Mammary epithelial cell (primary cell): ENCODE measurements at regions of chr13 and their contacts with region 1.

Region 1: DNA sequence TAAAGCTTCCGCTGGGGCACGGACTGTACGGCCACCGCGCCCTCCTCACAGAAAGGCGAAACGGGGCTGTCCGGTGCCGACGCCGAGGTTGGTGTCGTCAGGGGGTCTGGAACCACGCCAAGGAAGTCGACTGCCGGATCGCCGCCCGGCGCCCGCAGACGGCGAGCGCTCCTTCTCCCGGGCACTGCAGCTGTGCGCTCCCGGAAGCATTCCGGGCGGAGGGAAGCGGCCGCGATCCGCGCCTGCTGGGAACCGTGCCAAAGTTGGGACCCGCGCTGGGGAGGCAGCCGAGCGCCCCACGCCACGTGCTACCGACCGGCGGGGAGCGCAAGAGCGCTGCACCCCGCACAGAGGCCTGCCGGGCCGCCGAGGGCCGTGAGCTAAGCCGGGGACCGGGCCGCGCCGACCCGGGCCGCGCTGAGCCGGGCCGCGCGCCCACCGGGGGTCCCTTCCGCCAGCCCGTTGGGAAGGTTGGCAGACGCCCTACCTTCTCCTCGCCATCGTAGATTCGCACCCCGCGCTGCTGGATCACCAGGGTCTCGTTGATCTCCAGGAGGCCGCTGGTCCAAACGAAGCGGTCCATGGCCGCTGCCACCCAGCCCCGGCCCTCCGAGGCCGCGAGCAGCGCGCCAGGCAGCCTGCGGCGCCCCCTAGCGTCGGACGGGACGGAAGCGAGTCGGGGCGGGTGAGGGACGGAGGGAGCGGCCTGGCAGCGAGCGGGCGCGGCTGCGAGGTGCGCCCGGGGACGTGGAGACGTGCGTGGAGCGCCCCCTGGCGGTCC is at the start of gene VPS36:
- DNase-seq: peak; percentile 94
- H3K4me3 ChIP-seq: peak within 1 kb of the TSS; percentile 72 to 85 (median 73)
- H3K27ac ChIP-seq: peak within 1 kb of the TSS; percentile 79
- H3K4me1 ChIP-seq: peaks cover 42% of the 10 kb centered on the region
- H3K27me3 ChIP-seq: no peaks in the 10 kb centered on the region
- CTCF ChIP-seq: peak; percentile 85 to 97
- total RNA-seq, gene VPS36: 40.5 to 48.7 TPM

Region 2: DNA sequence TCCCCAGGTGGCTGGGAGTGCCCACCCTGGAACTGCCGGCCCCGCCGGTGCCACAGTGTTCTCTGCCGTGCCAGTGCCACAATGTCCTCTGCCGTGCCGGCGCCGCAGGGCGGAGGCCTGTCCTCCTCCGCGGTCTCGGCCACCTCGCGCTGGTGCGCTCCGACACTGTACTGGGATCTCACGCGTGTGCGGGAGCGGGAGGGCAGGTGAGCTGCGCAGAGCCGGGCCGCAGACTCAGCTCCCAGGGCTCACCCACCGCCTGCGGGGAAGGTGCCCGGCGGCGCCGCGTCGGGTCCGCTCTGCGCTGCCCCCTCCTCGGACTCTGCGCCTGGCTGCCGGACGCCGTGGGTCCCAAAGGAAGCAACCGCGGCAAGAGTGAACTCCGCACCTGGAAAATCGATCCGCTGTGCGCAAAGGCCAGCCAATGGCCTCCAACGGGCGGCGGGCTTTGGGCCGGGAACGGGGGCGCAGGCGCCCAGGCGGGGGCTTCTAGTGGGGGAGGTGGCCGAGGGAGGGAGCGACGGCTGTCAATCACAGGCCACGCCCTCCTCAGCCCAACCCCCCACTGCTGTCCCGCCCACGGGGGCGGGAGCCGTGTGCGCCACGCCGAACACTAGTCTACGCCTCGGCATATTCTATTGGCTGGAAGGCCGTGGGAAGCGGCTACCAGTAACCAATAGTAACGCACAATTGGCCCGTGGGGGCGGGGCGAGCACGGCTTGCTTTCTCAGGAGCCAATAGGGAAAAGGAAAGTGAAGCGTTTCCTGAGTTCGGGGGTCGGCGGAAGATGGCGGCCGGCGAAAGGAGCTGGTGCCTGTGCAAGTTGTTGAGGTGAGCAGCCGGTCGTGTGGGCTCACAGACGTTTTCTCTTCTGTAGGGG is 438.3 kb before region 1 on chr13 and contains the start of gene ALG11:
- CTCF ChIA-PET with region 1: interaction called, 5 read pairs
- dilution Hi-C with region 1: no loop called
- in situ Hi-C with region 1: loop called in 1 of 2 experiments (anchors 25 kb)
- intact Hi-C with region 1: loop called (anchors 10 kb)
- DNase-seq: peak; percentile 97
- H3K4me3 ChIP-seq: peak within 1 kb of the TSS; percentile 98 to 99 (median 98)
- H3K27ac ChIP-seq: peak within 1 kb of the TSS; percentile 86
- H3K4me1 ChIP-seq: peaks cover 10% of the 10 kb centered on the region
- H3K27me3 ChIP-seq: no peaks in the 10 kb centered on the region
- CTCF ChIP-seq: no peak
- total RNA-seq, gene ALG11: 19.5 to 29.4 TPM

Region 3: GRCh38 chr13:52159321-52160086 is 290.7 kb before region 1 on chr13 and contains the start of gene NEK3:
- CTCF ChIA-PET with region 1: no interaction called
- dilution Hi-C with region 1: no loop called
- in situ Hi-C with region 1: no loop called
- intact Hi-C with region 1: loop called (anchors 10 kb)
- DNase-seq: peak; percentile 46
- H3K4me3 ChIP-seq: peak within 1 kb of the TSS; percentile 76 to 87 (median 85)
- H3K27ac ChIP-seq: peak within 1 kb of the TSS; percentile 51
- H3K4me1 ChIP-seq: peaks cover 21% of the 10 kb centered on the region
- H3K27me3 ChIP-seq: no peaks in the 10 kb centered on the region
- CTCF ChIP-seq: no peak
- total RNA-seq, gene NEK3: 7.3 to 9.1 TPM

Region 4: DNA sequence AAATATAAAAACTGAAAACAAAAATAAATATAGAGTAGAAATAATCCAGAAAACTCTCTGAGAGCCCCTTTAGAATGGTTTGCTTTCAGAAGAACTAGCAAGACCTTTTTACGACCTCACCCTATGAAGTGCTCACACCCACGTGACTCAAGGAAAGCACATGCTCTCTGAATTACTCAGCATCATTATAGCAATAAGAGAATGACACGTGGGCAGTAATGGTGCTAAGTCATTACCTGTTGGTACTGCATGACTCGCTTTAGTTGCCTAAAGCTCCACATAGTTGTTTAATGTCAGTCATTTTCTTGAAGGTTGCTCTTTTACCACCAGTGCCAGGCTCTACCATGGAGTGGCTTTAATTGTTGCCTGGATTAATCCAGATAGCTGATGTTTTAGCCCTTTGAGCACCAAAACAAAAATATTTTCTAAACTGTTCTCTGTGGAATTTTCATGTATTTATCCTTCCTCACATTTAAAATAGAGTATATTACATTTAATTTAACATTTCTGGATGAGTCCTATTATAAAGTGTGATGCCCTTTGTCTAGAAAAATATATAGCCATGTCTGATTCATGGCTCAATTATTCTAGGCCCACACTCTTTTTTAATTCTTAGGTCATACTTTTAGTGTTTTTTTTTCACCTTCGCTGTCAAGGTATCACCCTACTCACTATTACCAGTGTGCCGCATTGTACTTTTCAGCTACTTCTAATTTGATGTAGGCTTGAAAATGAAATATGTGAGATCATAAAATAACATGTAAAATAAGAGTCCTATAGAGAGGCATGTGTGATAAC is 101.0 kb before region 1 on chr13:
- CTCF ChIA-PET with region 1: interaction called, 8 read pairs
- dilution Hi-C with region 1: loop called (anchors 5 kb)
- in situ Hi-C with region 1: loop called (anchors 5 to 10 kb)
- intact Hi-C with region 1: no loop called
- DNase-seq: peak; percentile 96
- H3K4me3 ChIP-seq: no peak overlapping the region
- H3K27ac ChIP-seq: peak overlapping the region; percentile 75
- H3K4me1 ChIP-seq: peaks cover 59% of the 10 kb centered on the region
- H3K27me3 ChIP-seq: no peaks in the 10 kb centered on the region
- CTCF ChIP-seq: no peak

Region 5: DNA sequence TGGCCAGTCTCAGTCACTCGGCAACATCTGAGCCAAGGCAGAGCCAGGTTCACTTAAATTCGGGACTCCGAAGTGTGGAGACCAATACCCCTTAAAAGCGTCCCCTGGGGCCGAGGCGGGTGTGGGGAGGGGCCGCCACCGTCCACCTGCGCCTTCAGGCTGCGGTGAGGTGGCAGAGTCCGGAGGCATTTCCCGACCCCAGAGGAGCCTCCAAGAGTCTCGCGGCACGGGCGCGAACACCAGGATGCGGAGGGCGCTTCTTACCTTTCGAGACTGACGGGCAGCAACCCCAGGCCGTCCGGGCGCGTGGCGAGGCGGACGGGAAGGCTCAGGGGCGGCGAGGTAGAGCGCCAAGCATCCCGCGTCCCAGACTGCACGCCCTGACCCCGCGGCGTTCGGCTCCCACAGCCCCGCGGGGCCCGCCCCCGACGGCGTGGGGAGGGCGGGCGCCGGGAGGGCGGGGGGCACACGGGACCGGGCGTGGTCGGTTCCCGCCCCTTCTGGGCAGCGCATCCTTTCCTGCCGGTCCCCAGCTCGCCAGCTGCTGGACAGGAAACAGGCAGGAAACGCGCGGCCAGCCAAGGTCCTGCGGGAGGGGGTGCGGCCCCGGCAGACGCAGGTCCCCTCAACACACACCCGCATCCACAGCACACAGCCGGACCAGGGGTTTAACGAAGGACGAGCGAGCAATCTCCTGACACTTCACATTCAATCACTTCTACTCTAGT is 44.3 kb before region 1 on chr13 and contains the start of gene THSD1:
- CTCF ChIA-PET with region 1: interaction called, 4 read pairs
- dilution Hi-C with region 1: no loop called
- in situ Hi-C with region 1: loop called in 1 of 2 experiments (anchors 5 kb)
- intact Hi-C with region 1: loop called (anchors 2 kb)
- DNase-seq: peak; percentile 53
- H3K4me3 ChIP-seq: peak within 1 kb of the TSS; percentile 78 to 97 (median 90)
- H3K27ac ChIP-seq: peak within 1 kb of the TSS; percentile 70
- H3K4me1 ChIP-seq: peaks cover 16% of the 10 kb centered on the region
- H3K27me3 ChIP-seq: no peaks in the 10 kb centered on the region
- CTCF ChIP-seq: no peak
- total RNA-seq, gene THSD1: 27.2 to 44.5 TPM

Region 6: DNA sequence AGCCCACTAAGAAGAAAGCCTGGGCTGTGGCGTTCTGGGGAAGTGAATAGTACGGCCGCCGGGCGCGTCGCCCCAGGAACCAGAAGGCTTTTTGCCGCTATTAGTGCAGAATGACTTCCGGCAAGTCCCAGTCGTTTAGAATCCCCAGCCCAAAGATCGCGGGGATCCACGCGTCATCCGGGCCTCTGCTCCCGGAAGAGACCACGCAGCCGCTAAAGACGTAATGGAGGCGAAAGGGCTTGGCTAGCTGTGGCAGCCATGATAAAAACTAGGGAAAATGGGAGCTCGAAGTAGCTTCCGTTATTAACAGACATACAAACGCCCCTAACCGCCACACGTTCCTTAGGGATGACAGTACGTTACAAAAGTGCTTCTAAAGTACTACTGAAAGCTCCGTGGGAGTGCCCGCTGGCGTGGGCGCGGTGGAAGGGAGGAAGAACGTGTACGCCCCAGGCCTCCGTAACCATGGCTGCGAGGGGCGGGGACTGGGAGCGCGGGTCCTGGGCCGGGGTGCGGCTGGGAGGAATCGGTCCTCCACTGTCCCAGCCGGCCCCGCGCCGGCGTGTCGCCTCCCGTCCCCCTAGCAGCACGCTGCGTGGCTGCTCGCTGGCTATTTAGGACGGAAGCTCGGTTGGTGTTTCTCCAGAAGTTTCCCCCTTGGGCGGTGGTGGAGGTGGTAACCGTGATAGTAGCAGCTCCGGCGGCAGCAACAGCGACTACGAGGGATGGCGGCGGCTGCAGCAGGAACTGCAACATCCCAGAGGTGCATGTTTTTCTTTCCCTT is 202.2 kb after region 1 on chr13 and contains the start of gene SUGT1:
- CTCF ChIA-PET with region 1: interaction called, 4 read pairs
- dilution Hi-C with region 1: no loop called
- in situ Hi-C with region 1: no loop called
- intact Hi-C with region 1: loop called (anchors 2 kb)
- DNase-seq: peak; percentile 98
- H3K4me3 ChIP-seq: peak within 1 kb of the TSS; percentile 77 to 94 (median 94)
- H3K27ac ChIP-seq: peak within 1 kb of the TSS; percentile 100
- H3K4me1 ChIP-seq: peaks cover 12% of the 10 kb centered on the region
- H3K27me3 ChIP-seq: no peaks in the 10 kb centered on the region
- CTCF ChIP-seq: peak; percentile 58 to 68
- total RNA-seq, gene SUGT1: 16.8 to 45.9 TPM